ENCODE measurements at regions of chr22 and their contacts with region 1.

Region 1: GRCh38 chr22:41940832-41941765 is 5.9 kb downstream of the CENPM start:
- DNase-seq: peak; percentile 80 to 92 (median 86)
- ATAC-seq: peak; percentile 61
- H3K4me3 ChIP-seq: peak overlapping the region; percentile 18
- H3K4me3 Mint-ChIP-seq: peak overlapping the region; percentile 78
- H3K27ac ChIP-seq: peak overlapping the region; percentile 96 to 99
- H3K27ac Mint-ChIP-seq: peak overlapping the region; percentile 97
- H3K4me1 ChIP-seq: peaks cover 43% of the 10 kb centered on the region
- H3K4me1 Mint-ChIP-seq: peaks cover 39% of the 10 kb centered on the region
- H3K27me3 ChIP-seq: no peaks in the 10 kb centered on the region
- H3K27me3 Mint-ChIP-seq: no peaks in the 10 kb centered on the region
- CTCF ChIP-seq: peak; percentile 98

Region 2: GRCh38 chr22:41688365-41689211 is 252.5 kb before region 1 on chr22 and contains the start of gene SNU13:
- CTCF ChIA-PET with region 1: no interaction called
- POLR2A ChIA-PET with region 1: interaction called, 33 read pairs
- intact Hi-C with region 1: no loop called
- DNase-seq: peak; percentile 87 to 97 (median 90)
- ATAC-seq: peak; percentile 92
- H3K4me3 ChIP-seq: peak within 1 kb of the TSS; percentile 91
- H3K4me3 Mint-ChIP-seq: peak within 1 kb of the TSS; percentile 96
- H3K27ac ChIP-seq: peak within 1 kb of the TSS; percentile 95 to 98
- H3K27ac Mint-ChIP-seq: peak within 1 kb of the TSS; percentile 99
- H3K4me1 ChIP-seq: peaks cover 39% of the 10 kb centered on the region
- H3K4me1 Mint-ChIP-seq: peaks cover 45% of the 10 kb centered on the region
- H3K27me3 ChIP-seq: no peaks in the 10 kb centered on the region
- H3K27me3 Mint-ChIP-seq: no peaks in the 10 kb centered on the region
- CTCF ChIP-seq: no peak
- total RNA-seq, gene SNU13: 134 to 140 TPM

Region 3: GRCh38 chr22:41780746-41781505 is 160.2 kb before region 1 on chr22:
- CTCF ChIA-PET with region 1: interaction called, 3 read pairs
- POLR2A ChIA-PET with region 1: interaction called, 43 read pairs
- intact Hi-C with region 1: no loop called
- DNase-seq: peak; percentile 78 to 98 (median 88)
- ATAC-seq: peak; percentile 91
- H3K4me3 ChIP-seq: peak overlapping the region; percentile 69
- H3K4me3 Mint-ChIP-seq: peak overlapping the region; percentile 86
- H3K27ac ChIP-seq: peak overlapping the region; percentile 77 to 94
- H3K27ac Mint-ChIP-seq: peak overlapping the region; percentile 96
- H3K4me1 ChIP-seq: peaks cover 57% of the 10 kb centered on the region
- H3K4me1 Mint-ChIP-seq: peaks cover 54% of the 10 kb centered on the region
- H3K27me3 ChIP-seq: no peaks in the 10 kb centered on the region
- H3K27me3 Mint-ChIP-seq: no peaks in the 10 kb centered on the region
- CTCF ChIP-seq: no peak

Region 4: DNA sequence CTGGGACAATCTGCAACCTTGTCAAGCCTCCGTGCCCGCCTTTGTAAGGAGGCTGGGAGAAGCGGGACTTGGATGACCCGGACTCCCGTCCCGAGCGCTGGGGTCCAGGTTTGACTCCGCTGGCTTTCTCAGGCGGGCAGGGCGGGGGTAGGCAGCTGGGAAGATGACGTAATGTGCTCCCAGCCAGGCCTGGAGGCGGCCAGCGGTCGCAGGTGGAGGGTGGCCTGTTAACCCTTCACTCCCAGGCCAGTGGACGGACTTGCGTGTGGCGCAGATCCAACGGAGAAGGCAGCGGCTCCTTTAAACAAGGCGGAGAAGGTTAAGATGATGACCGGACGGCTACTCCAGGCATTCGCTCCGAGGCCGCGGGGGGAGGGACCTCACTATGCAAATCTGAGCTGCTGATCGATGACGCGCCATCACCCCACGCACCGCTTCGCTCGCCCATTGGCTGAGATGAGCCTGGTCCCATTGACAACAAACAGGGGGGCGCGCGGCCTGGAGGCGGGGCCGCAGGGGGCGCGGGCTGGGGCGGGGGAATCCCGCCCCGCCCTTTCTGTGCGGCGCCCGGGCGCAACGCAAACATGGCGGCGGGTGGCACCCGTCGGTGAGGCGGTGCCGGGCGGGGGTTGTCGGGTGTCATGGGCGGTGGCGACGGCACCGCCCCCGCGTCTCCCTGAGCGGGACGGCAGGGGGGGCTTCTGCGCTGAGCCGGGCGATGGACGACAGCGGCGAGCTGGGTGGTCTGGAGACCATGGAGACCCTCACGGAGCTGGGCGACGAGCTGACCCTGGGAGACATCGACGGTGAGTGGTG is 108.3 kb before region 1 on chr22 and contains the start of gene SREBF2:
- CTCF ChIA-PET with region 1: interaction called, 17 read pairs
- POLR2A ChIA-PET with region 1: interaction called, 107 read pairs
- intact Hi-C with region 1: no loop called
- DNase-seq: peak; percentile 96 to 99 (median 98)
- ATAC-seq: peak; percentile 93
- H3K4me3 ChIP-seq: peak within 1 kb of the TSS; percentile 96
- H3K4me3 Mint-ChIP-seq: peak within 1 kb of the TSS; percentile 97
- H3K27ac ChIP-seq: peak within 1 kb of the TSS; percentile 89 to 98
- H3K27ac Mint-ChIP-seq: peak within 1 kb of the TSS; percentile 100
- H3K4me1 ChIP-seq: peaks cover 30% of the 10 kb centered on the region
- H3K4me1 Mint-ChIP-seq: peaks cover 43% of the 10 kb centered on the region
- H3K27me3 ChIP-seq: no peaks in the 10 kb centered on the region
- H3K27me3 Mint-ChIP-seq: no peaks in the 10 kb centered on the region
- CTCF ChIP-seq: no peak
- total RNA-seq, gene SREBF2: 67.2 to 69.9 TPM

Region 5: DNA sequence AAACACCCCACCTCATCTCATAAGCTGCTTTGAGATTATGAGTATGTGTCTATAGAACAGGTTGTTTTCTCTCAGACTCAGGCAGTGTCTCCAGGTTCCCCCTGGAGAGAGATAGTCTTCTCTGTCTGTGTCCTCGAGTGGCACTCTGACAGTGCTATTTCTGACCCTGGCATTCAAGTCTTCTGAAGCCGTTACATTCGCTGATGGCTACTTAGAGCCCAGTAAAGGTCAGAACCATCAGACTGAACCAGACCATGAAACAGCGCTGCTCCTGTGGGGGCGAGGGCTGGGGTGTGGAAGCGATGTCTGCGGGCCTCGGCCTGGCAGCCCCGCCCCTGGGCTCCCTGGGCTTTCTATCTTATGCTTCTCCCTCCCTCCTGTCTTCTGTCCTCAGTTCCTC is 49.7 kb before region 1 on chr22:
- CTCF ChIA-PET with region 1: no interaction called
- POLR2A ChIA-PET with region 1: no interaction called
- intact Hi-C with region 1: no loop called
- DNase-seq: no peak
- ATAC-seq: no peak
- H3K4me3 ChIP-seq: no peak overlapping the region
- H3K4me3 Mint-ChIP-seq: no peak overlapping the region
- H3K27ac ChIP-seq: no peak overlapping the region
- H3K27ac Mint-ChIP-seq: no peak overlapping the region
- H3K4me1 ChIP-seq: no peaks in the 10 kb centered on the region
- H3K4me1 Mint-ChIP-seq: no peaks in the 10 kb centered on the region
- H3K27me3 ChIP-seq: no peaks in the 10 kb centered on the region
- H3K27me3 Mint-ChIP-seq: no peaks in the 10 kb centered on the region
- CTCF ChIP-seq: no peak

Region 6: DNA sequence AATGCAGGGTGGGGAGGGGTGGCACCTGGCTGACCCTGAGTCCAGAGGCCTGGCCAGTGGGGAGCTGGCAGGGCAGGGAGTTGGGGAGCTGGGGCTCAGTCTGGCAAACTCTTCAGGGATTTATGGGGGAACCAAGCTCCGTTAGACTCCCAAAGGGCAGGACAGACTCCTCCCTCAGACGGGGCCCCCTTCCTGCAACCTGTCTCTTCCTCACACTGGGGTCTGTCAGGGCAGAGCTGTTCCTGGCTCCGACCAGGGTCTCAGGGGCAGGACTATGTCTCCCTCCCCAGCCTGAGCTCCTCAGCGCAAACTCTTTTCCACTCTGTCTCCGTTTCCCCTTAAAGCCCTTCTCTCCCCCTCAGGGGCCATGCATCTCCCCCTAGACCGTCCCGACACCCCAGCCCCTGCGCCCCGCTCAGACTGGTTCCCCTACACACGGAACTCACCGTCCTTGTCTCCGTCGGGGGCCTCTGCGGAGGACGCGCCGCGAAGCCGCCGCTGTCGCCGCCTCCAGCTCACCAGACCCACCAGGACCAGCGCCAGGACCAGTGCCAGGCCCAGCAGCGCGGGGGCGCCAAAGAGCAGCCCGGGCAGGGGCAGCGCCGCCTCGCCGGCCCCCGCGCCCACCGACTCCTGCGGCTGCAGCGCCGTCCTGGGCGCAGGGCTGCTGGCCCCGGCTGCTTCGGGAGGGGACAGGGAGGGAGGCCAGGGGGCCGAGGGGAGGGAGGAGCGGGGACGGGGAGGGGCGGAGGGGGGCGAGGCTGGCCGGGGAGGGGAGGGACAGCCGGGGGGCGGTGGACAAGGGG is 15.2 kb before region 1 on chr22:
- CTCF ChIA-PET with region 1: interaction called, 63 read pairs
- POLR2A ChIA-PET with region 1: interaction called, 63 read pairs
- intact Hi-C with region 1: loop called in 1 of 2 experiments (anchors 2 kb)
- DNase-seq: peak; percentile 59 to 88 (median 76)
- ATAC-seq: peak; percentile 84
- H3K4me3 ChIP-seq: peak overlapping the region; percentile 45
- H3K4me3 Mint-ChIP-seq: peak overlapping the region; percentile 80
- H3K27ac ChIP-seq: no peak overlapping the region
- H3K27ac Mint-ChIP-seq: peak overlapping the region; percentile 55
- H3K4me1 ChIP-seq: peaks cover 30% of the 10 kb centered on the region
- H3K4me1 Mint-ChIP-seq: peaks cover 7% of the 10 kb centered on the region
- H3K27me3 ChIP-seq: peaks cover 0 to 9% of the 10 kb centered on the region in 2 experiments
- H3K27me3 Mint-ChIP-seq: peaks cover 9% of the 10 kb centered on the region
- CTCF ChIP-seq: peak; percentile 75